Cardiac septum (tissue), 1 donor: ENCODE measurements at regions of chr16 and their contacts with region 1.

Region 1: DNA sequence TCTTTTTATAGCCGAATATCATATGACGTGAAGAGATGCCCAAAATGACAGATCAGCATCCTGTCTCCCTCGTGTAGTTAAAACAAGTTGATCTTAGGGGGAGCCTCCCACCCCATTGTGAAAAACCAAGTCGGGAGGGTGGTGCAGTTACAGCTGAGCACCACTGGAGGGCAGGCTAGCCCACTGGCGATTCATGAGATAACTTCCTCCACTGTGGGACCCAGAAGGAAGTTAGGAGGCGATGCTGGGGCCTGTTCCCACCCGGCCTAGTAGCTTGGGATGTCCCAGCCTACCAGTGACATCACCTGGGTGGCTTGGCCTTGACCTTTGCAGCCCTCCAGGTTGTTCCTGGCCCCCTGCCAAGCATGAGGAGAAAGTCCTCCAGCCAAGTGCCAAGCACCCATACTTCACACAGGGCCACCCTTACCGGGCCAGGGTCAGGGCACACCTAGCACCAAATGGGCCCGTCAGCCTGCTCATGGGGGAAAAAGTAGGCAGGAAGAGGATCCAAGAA is 8.1 kb upstream of the CPNE2 start:
- DNase-seq: peak; percentile 89

Region 2: GRCh38 chr16:57167953-57168352 is 83.6 kb after region 1 on chr16:
- intact Hi-C with region 1: loop called (anchors 1 kb)
- DNase-seq: no peak

Region 3: DNA sequence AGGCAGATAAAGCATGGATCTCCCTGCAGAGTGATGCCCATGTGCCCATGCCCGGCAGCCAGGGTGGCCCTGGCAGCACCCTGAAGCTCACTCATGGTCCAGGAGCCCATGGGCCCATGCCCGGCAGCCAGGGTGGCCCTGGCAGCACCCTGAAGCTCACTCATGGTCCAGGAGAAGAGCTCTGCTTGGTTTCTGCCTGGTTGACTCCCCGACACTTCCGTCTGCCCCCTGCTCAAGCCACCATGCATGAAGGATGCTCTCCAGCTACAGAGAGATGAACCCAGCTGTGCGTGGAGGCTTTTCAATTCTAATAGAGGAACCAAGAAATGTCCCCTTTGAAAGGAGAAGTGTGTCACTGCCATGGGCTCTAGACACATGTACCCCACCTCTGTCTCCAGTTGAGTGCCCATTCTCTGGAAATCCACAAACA is 329.0 kb after region 1 on chr16:
- intact Hi-C with region 1: loop called (anchors 10 kb)
- DNase-seq: peak; percentile 63

Region 4: DNA sequence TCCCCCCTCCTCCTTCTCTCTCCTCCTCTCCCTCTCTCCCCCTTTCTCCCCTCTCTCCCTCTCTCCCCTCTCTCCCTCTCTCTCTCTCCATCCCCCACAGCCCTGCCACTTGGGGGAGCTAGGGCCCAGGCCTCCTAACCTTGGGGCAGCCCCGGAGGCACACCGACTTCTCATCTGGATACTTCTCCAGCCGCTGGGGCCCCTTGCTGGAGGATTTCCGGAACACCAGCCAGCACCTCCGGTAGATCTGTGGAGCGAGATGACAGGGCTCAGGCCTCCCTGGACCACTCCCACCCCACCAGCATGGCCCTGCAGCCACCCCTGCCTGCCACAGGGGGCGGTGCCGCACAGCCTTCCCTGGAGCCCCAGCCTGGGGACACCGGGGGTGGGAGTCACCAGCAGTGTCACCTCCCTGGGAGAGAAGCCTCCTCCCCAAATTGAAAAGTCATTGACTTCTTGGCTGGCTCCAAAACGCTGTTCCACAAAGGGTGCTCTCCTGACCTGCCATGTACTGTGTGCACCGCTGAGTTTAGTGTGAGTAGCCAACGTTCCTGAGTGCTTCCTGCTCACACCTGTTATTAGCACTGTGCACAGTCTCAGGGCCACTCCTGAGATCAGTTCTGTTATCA is 391.5 kb after region 1 on chr16:
- intact Hi-C with region 1: no loop called
- DNase-seq: peak; percentile 81